T-cell (primary cell): ENCODE measurements at regions of chr1 and their contacts with region 1.

Region 1: GRCh38 chr1:27318596-27318995 is 3.4 kb upstream of the TMEM222 start:
- DNase-seq: no peak
- ATAC-seq: no peak
- H3K4me3 ChIP-seq: no peak overlapping the region
- H3K4me3 Mint-ChIP-seq: no peak overlapping the region
- H3K27ac ChIP-seq: no peak overlapping the region
- H3K27ac Mint-ChIP-seq: no peak overlapping the region
- H3K4me1 ChIP-seq: peaks cover 6 to 18% of the 10 kb centered on the region in 2 experiments
- H3K4me1 Mint-ChIP-seq: peaks cover 19 to 22% (median 20%) of the 10 kb centered on the region in 3 donors
- H3K27me3 ChIP-seq: peaks cover 0 to 5% of the 10 kb centered on the region in 2 experiments
- H3K27me3 Mint-ChIP-seq: peaks cover 3 to 12% of the 10 kb centered on the region in 2 donors

Region 2: DNA sequence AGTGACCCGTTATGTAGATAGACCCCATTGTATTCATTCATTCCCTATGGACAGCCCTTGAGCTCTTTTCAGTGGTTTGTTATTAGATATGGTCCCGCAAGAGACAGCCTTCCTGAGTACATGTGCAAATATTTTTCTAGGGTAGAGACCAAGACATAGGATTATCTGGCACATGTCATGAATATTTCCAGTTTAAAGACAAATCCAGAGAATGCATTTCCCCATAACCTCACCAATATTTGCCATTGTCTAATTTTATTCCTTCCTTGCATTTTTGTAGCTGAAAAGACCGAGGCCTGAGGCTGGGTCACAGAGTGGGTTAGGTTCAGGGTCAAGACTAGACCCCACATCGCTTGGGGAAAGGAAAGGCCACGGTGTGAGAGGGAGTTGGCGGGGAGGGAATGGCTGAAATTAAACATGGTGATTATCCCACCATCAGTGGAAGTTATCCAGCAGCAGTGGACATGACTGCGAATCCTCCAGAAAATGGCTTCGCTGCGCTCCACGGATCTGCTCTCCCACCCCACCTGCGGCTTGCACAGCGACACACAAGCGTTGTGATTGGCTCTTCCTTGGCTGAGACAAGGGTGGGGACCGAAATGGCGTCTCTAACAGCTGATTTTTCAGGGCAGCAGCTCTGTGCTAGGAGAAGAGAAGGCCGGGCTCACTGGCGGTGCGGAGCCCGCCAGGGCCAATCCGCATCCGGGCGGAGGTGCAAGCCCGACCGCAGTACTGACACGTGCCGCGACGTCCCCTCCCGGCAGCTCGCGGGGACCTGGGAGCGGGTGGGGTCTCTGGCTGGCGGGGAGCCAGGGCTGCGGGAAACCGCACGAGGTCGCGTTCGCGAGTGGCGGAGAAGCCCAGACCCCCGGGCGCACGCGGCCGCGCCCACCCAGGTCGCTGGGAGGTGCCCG is 1396.3 kb before region 1 on chr1:
- CTCF ChIA-PET with region 1: interaction called in 1 of 2 experiments, 10 read pairs
- POLR2A ChIA-PET with region 1: no interaction called
- DNase-seq: peak; percentile 11 to 68 (median 35)
- ATAC-seq: peak; percentile 82 to 87 (median 84)
- H3K4me3 ChIP-seq: peak overlapping the region; percentile 56 to 75
- H3K4me3 Mint-ChIP-seq: peak overlapping the region; percentile 72 to 86 (median 79)
- H3K27ac ChIP-seq: peak overlapping the region; percentile 20
- H3K27ac Mint-ChIP-seq: peak overlapping the region in 1 of 2 donors; percentile 65
- H3K4me1 ChIP-seq: peaks cover 24 to 40% of the 10 kb centered on the region in 2 experiments
- H3K4me1 Mint-ChIP-seq: peaks cover 25 to 37% (median 30%) of the 10 kb centered on the region in 3 donors
- H3K27me3 ChIP-seq: peaks cover 0 to 11% of the 10 kb centered on the region in 2 experiments
- H3K27me3 Mint-ChIP-seq: no peaks in the 10 kb centered on the region

Region 3: GRCh38 chr1:27338751-27339150 is 20.2 kb after region 1 on chr1:
- CTCF ChIA-PET with region 1: no interaction called
- POLR2A ChIA-PET with region 1: interaction called in 1 of 2 experiments, 11 read pairs
- DNase-seq: no peak
- ATAC-seq: no peak
- H3K4me3 ChIP-seq: no peak overlapping the region
- H3K4me3 Mint-ChIP-seq: peak overlapping the region in 1 of 3 donors; percentile 87
- H3K27ac ChIP-seq: no peak overlapping the region
- H3K27ac Mint-ChIP-seq: peak overlapping the region; percentile 88 to 91
- H3K4me1 ChIP-seq: peaks cover 19 to 40% of the 10 kb centered on the region in 2 experiments
- H3K4me1 Mint-ChIP-seq: peaks cover 31 to 44% (median 40%) of the 10 kb centered on the region in 3 donors
- H3K27me3 ChIP-seq: no peaks in the 10 kb centered on the region
- H3K27me3 Mint-ChIP-seq: no peaks in the 10 kb centered on the region